Sigmoid colon (tissue), 7 donors: ENCODE measurements at regions of chr20 and their contacts with region 1.

Region 1: GRCh38 chr20:21505161-21505809 is 8.6 kb downstream of the NKX2-2 start:
- DNase-seq: no peak
- H3K4me3 ChIP-seq: peak overlapping the region in 3 of 4 donors; percentile 19 to 46 (median 45)
- H3K27ac ChIP-seq: no peak overlapping the region
- H3K4me1 ChIP-seq: peaks cover 0 to 30% (median 25%) of the 10 kb centered on the region in 4 donors
- H3K27me3 ChIP-seq: peaks cover 44 to 97% (median 71%) of the 10 kb centered on the region in 3 donors
- CTCF ChIP-seq: peak; percentile 77 to 97 (median 92)
- EP300 ChIP-seq: no peak
- POLR2A ChIP-seq: no peak

Region 2: GRCh38 chr20:20837574-20838021 is 667.7 kb before region 1 on chr20:
- intact Hi-C with region 1: loop called (anchors 2 kb)
- DNase-seq: no peak
- H3K4me3 ChIP-seq: peak overlapping the region in 1 of 4 donors; percentile 20
- H3K27ac ChIP-seq: no peak overlapping the region
- H3K4me1 ChIP-seq: peaks cover 0 to 5% (median 0%) of the 10 kb centered on the region in 4 donors
- H3K27me3 ChIP-seq: peaks cover 0 to 20% (median 11%) of the 10 kb centered on the region in 3 donors
- CTCF ChIP-seq: peak; percentile 5 to 59 (median 46)
- EP300 ChIP-seq: no peak
- POLR2A ChIP-seq: no peak

Region 3: GRCh38 chr20:20860078-20860806 is 645.0 kb before region 1 on chr20:
- intact Hi-C with region 1: loop called (anchors 1 kb)
- DNase-seq: peak; percentile 88
- H3K4me3 ChIP-seq: no peak overlapping the region
- H3K27ac ChIP-seq: no peak overlapping the region
- H3K4me1 ChIP-seq: no peaks in the 10 kb centered on the region
- H3K27me3 ChIP-seq: peaks cover 0 to 22% (median 4%) of the 10 kb centered on the region in 3 donors
- CTCF ChIP-seq: peak; percentile 77 to 92 (median 86)
- EP300 ChIP-seq: no peak
- POLR2A ChIP-seq: no peak

Region 4: GRCh38 chr20:21099751-21100577 is 405.3 kb before region 1 on chr20:
- intact Hi-C with region 1: loop called (anchors 10 kb)
- DNase-seq: no peak
- H3K4me3 ChIP-seq: peak overlapping the region; percentile 1 to 44 (median 36)
- H3K27ac ChIP-seq: peak overlapping the region in 1 of 4 donors; percentile 1
- H3K4me1 ChIP-seq: peaks cover 0 to 43% (median 39%) of the 10 kb centered on the region in 4 donors
- H3K27me3 ChIP-seq: peaks cover 62 to 89% (median 81%) of the 10 kb centered on the region in 3 donors
- CTCF ChIP-seq: no peak
- EP300 ChIP-seq: no peak
- POLR2A ChIP-seq: no peak

Region 5: GRCh38 chr20:21235484-21236445 is 269.5 kb before region 1 on chr20:
- intact Hi-C with region 1: loop called (anchors 2 kb)
- DNase-seq: no peak
- H3K4me3 ChIP-seq: no peak overlapping the region
- H3K27ac ChIP-seq: peak overlapping the region in 2 of 4 donors; percentile 27 to 30
- H3K4me1 ChIP-seq: peaks cover 0 to 13% (median 2%) of the 10 kb centered on the region in 4 donors
- H3K27me3 ChIP-seq: no peaks in the 10 kb centered on the region
- CTCF ChIP-seq: peak; percentile 19 to 73 (median 46)
- EP300 ChIP-seq: no peak
- POLR2A ChIP-seq: no peak

Region 6: DNA sequence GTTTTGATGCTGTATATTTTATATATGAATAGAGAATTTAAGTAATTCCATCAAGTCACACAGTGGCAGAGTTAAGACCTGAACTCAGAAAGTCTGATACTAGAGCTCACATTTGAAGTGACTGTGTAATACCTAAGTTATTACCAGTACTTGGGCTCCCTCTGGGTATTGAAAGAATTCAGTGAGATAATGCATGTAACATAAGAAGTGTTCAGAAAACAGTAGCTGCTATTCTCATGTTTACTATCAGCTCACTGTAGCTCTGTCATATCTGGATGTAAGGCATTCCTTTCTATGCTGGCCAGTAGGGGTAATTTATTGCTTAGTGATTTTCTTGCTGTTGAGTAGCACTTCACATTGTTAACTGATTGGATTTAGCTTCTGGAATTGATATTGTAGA is 152.6 kb before region 1 on chr20:
- intact Hi-C with region 1: no loop called
- DNase-seq: no peak
- H3K4me3 ChIP-seq: no peak overlapping the region
- H3K27ac ChIP-seq: no peak overlapping the region
- H3K4me1 ChIP-seq: peaks cover 0 to 6% (median 0%) of the 10 kb centered on the region in 4 donors
- H3K27me3 ChIP-seq: no peaks in the 10 kb centered on the region
- CTCF ChIP-seq: no peak
- EP300 ChIP-seq: no peak
- POLR2A ChIP-seq: no peak

Region 7: GRCh38 chr20:21380711-21381110 is 124.6 kb before region 1 on chr20:
- intact Hi-C with region 1: no loop called
- DNase-seq: no peak
- H3K4me3 ChIP-seq: no peak overlapping the region
- H3K27ac ChIP-seq: no peak overlapping the region
- H3K4me1 ChIP-seq: no peaks in the 10 kb centered on the region
- H3K27me3 ChIP-seq: no peaks in the 10 kb centered on the region
- CTCF ChIP-seq: no peak
- EP300 ChIP-seq: no peak
- POLR2A ChIP-seq: no peak

Region 8: GRCh38 chr20:21615617-21616080 is 110.4 kb after region 1 on chr20:
- intact Hi-C with region 1: no loop called
- DNase-seq: no peak
- H3K4me3 ChIP-seq: no peak overlapping the region
- H3K27ac ChIP-seq: no peak overlapping the region
- H3K4me1 ChIP-seq: no peaks in the 10 kb centered on the region
- H3K27me3 ChIP-seq: peaks cover 0 to 21% (median 0%) of the 10 kb centered on the region in 3 donors
- CTCF ChIP-seq: peak in 3 of 4 experiments; percentile 31 to 48 (median 32)
- EP300 ChIP-seq: no peak
- POLR2A ChIP-seq: no peak